GM10248 (cell line): ENCODE measurements at regions of chr4 and their contacts with region 1.

Region 1: GRCh38 chr4:10690185-10690907 is 5.8 kb upstream of the CLNK start:
- DNase-seq: no peak
- CTCF ChIP-seq: no peak

Region 2: DNA sequence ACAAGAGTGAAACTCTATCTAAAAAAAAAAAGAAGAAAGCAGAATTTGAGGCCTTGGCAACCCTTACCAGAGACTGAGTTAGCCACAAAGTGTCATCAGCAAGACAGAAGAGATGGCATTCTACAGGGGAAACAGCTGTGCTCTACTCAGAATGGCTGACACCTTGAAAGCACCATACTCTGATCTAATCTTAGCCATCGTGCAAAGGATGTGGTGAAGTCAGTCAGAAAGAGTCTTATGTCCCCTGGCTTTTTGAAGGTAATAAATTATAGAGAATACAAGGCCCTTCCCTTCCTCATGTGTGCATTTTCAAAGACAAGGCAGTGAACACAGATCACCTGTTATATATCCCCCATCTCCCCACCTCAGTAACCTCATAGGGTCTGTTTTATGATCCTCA is 19.0 kb before region 1 on chr4:
- CTCF ChIA-PET with region 1: interaction called, 11 read pairs
- POLR2A ChIA-PET with region 1: no interaction called
- DNase-seq: peak; percentile 35
- CTCF ChIP-seq: no peak

Region 3: GRCh38 chr4:10701702-10702460 is 11.5 kb after region 1 on chr4:
- CTCF ChIA-PET with region 1: interaction called, 23 read pairs
- POLR2A ChIA-PET with region 1: no interaction called
- DNase-seq: no peak
- CTCF ChIP-seq: no peak

Region 4: DNA sequence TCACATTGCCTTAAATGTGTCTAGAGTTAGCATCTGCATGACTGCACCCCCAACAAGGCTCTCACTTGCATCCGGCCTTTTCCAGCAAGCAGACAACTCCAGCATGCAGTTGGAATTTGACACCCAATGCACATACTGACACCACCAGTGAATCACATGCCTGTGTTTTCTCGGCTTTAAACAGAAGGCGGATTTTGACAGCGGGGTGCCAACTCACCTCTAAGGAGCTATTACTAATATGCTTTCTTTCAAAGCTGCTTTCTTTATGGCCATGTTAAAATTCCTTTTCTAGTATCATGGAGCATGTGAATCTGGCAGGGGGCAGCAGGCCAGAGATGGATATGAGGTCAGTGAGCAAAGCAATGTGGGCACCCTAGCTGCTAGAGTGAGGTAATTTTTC is 72.2 kb after region 1 on chr4:
- CTCF ChIA-PET with region 1: no interaction called
- POLR2A ChIA-PET with region 1: no interaction called
- DNase-seq: no peak
- CTCF ChIP-seq: no peak